Naive thymus-derived CD4-positive, alpha-beta T cell (primary cell): ENCODE measurements at regions of chr3 and their contacts with region 1.

Region 1: GRCh38 chr3:98022978-98023820 is 11.9 kb downstream of the GABRR3 start:
- DNase-seq: peak; percentile 72 to 96 (median 85)
- ATAC-seq: peak; percentile 85
- H3K4me3 ChIP-seq: no peak overlapping the region
- H3K4me3 Mint-ChIP-seq: peak overlapping the region in 3 of 10 donors; percentile 0 to 58 (median 8)
- H3K27ac ChIP-seq: no peak overlapping the region
- H3K27ac Mint-ChIP-seq: peak overlapping the region in 7 of 9 donors; percentile 2 to 66 (median 20)
- H3K4me1 ChIP-seq: peaks cover 0 to under 1% of the 10 kb centered on the region in 2 donors
- H3K4me1 Mint-ChIP-seq: peaks cover 2 to 27% (median 10%) of the 10 kb centered on the region in 7 donors
- H3K27me3 ChIP-seq: no peaks in the 10 kb centered on the region
- H3K27me3 Mint-ChIP-seq: peaks cover 0 to 5% (median 0%) of the 10 kb centered on the region in 5 donors

Region 2: GRCh38 chr3:97719156-97719821 is 303.9 kb before region 1 on chr3:
- CTCF ChIA-PET with region 1: interaction called, 3 read pairs
- POLR2A ChIA-PET with region 1: no interaction called
- intact Hi-C with region 1: loop called in 1 of 2 experiments (anchors 1 kb)
- DNase-seq: peak; percentile 12 to 63 (median 50)
- ATAC-seq: peak; percentile 95
- H3K4me3 ChIP-seq: no peak overlapping the region
- H3K4me3 Mint-ChIP-seq: peak overlapping the region in 6 of 10 donors; percentile 35 to 60 (median 48)
- H3K27ac ChIP-seq: no peak overlapping the region
- H3K27ac Mint-ChIP-seq: peak overlapping the region in 1 of 9 donors; percentile 33
- H3K4me1 ChIP-seq: no peaks in the 10 kb centered on the region
- H3K4me1 Mint-ChIP-seq: no peaks in the 10 kb centered on the region
- H3K27me3 ChIP-seq: no peaks in the 10 kb centered on the region
- H3K27me3 Mint-ChIP-seq: peaks cover 0 to 20% (median 3%) of the 10 kb centered on the region in 5 donors

Region 3: GRCh38 chr3:98274914-98275313 is 251.7 kb after region 1 on chr3:
- CTCF ChIA-PET with region 1: no interaction called
- POLR2A ChIA-PET with region 1: no interaction called
- intact Hi-C with region 1: no loop called
- DNase-seq: no peak
- ATAC-seq: no peak
- H3K4me3 ChIP-seq: no peak overlapping the region
- H3K4me3 Mint-ChIP-seq: no peak overlapping the region
- H3K27ac ChIP-seq: no peak overlapping the region
- H3K27ac Mint-ChIP-seq: no peak overlapping the region
- H3K4me1 ChIP-seq: no peaks in the 10 kb centered on the region
- H3K4me1 Mint-ChIP-seq: no peaks in the 10 kb centered on the region
- H3K27me3 ChIP-seq: no peaks in the 10 kb centered on the region
- H3K27me3 Mint-ChIP-seq: peaks cover under 1 to 14% (median 9%) of the 10 kb centered on the region in 5 donors